Activated CD4-positive, alpha-beta memory T cell treated with anti-CD3 and anti-CD28 coated beads for 36 hours (primary cell): ENCODE measurements at regions of chr2 and their contacts with region 1.

Region 1: DNA sequence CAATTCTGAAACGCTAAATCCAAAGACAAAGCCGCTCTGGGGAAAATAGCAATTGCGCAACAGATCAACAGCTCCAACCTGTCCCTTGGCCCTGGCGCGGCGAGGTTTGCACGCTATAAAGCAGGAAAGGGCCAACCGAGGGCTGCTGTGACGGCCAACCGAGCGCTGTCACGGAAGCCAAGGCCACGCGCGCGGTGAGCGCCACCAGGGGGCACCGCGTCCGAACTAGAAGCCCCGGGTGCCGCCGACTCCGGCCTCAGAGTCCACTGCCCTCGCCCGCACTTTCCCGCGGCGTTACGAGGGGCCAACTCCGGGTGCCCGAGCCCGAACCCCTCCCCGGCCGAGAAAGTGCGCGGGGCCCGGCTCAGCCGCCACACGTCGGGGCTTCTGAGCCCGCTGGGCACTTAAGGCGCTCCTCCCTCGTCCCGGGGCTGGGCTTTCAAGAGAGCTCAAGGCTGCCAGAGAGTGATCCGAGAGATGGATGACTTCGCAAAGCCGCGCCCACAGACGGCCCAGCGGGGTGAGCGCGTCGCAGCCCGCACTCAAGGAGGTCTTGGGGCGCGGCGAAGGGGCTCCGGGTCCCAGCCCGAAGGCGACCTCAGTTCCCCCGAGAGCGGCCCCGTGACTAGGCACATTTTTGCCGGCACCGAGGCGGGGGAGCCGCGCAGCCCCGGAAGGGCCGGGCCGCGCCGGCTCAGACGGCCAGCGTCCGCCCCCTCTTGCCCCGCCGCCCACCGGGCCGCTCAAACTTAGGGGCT is 897 bp downstream of the NFE2L2 start:
- DNase-seq: peak; percentile 96
- H3K4me3 Mint-ChIP-seq: peak overlapping the region; percentile 86
- H3K27ac Mint-ChIP-seq: peak overlapping the region; percentile 99
- H3K4me1 Mint-ChIP-seq: peaks cover 52% of the 10 kb centered on the region
- H3K27me3 Mint-ChIP-seq: no peaks in the 10 kb centered on the region

Region 2: GRCh38 chr2:176931588-176932563 is 331.8 kb before region 1 on chr2:
- CTCF ChIA-PET with region 1: no interaction called
- POLR2A ChIA-PET with region 1: no interaction called
- intact Hi-C with region 1: loop called (anchors 10 kb)
- DNase-seq: peak; percentile 27
- H3K4me3 Mint-ChIP-seq: no peak overlapping the region
- H3K27ac Mint-ChIP-seq: peak overlapping the region; percentile 20
- H3K4me1 Mint-ChIP-seq: peaks cover 13% of the 10 kb centered on the region
- H3K27me3 Mint-ChIP-seq: peaks cover 1% of the 10 kb centered on the region

Region 3: DNA sequence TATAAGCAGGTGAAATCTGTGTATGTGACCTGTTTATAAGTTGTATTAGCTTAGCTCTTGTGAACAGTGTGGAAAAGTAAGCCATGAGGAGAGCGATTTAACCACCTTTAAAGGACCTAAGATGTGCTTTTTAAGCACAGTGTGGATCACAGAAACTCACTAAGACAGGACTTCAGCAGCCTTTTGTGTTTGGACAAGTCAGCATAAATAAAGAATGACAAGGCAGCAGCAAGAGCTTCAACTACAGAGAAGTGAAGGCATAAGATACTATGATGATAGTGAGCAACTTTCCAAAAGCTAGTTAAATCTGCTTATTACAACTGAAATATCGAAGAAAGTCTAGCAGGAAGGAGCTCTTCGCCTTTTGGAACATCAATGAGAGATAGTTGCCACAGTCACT is 42.1 kb before region 1 on chr2:
- CTCF ChIA-PET with region 1: interaction called, 16 read pairs
- POLR2A ChIA-PET with region 1: interaction called, 13 read pairs
- intact Hi-C with region 1: no loop called
- DNase-seq: no peak
- H3K4me3 Mint-ChIP-seq: no peak overlapping the region
- H3K27ac Mint-ChIP-seq: no peak overlapping the region
- H3K4me1 Mint-ChIP-seq: peaks cover 61% of the 10 kb centered on the region
- H3K27me3 Mint-ChIP-seq: no peaks in the 10 kb centered on the region

Region 4: DNA sequence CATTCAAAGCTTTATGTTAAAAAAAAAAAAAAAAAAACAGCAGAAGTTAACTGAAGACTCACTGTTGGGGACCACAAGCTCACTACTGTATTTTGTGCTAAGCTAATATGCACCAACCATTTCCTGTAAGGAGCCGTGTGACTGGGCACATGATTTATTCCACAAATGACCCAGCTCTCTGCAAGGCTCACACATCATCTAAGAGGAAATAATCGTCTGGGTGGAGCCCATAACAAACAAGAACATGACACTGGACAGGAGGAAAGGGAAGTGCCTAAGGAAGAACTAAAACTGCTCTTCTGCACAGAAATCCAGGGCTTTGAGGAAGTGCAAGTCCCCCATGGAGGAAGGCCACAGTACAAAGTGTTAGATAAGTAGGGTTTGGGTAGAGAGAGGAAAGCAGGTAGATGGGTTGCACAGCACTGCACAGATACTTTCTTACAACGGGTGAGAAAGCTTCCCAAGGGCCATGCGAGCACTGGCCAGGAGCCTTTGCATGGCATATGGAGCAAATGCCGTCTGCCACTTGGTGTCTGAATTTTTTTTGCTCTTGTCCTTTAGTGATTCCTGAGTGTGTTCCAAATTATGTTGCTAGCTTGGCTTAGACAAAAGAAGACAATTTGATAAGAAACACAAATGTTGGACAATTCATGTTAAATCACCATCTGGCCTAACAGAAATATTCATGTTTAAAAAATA is 23.5 kb before region 1 on chr2:
- CTCF ChIA-PET with region 1: interaction called, 38 read pairs
- POLR2A ChIA-PET with region 1: interaction called, 28 read pairs
- intact Hi-C with region 1: loop called (anchors 1 kb)
- DNase-seq: peak; percentile 61
- H3K4me3 Mint-ChIP-seq: no peak overlapping the region
- H3K27ac Mint-ChIP-seq: peak overlapping the region; percentile 83
- H3K4me1 Mint-ChIP-seq: peaks cover 82% of the 10 kb centered on the region
- H3K27me3 Mint-ChIP-seq: no peaks in the 10 kb centered on the region

Region 5: GRCh38 chr2:177296040-177296439 is 32.4 kb after region 1 on chr2:
- CTCF ChIA-PET with region 1: interaction called, 30 read pairs
- POLR2A ChIA-PET with region 1: interaction called, 27 read pairs
- intact Hi-C with region 1: loop called (anchors 1 kb)
- DNase-seq: no peak
- H3K4me3 Mint-ChIP-seq: no peak overlapping the region
- H3K27ac Mint-ChIP-seq: no peak overlapping the region
- H3K4me1 Mint-ChIP-seq: peaks cover 22% of the 10 kb centered on the region
- H3K27me3 Mint-ChIP-seq: no peaks in the 10 kb centered on the region

Region 6: DNA sequence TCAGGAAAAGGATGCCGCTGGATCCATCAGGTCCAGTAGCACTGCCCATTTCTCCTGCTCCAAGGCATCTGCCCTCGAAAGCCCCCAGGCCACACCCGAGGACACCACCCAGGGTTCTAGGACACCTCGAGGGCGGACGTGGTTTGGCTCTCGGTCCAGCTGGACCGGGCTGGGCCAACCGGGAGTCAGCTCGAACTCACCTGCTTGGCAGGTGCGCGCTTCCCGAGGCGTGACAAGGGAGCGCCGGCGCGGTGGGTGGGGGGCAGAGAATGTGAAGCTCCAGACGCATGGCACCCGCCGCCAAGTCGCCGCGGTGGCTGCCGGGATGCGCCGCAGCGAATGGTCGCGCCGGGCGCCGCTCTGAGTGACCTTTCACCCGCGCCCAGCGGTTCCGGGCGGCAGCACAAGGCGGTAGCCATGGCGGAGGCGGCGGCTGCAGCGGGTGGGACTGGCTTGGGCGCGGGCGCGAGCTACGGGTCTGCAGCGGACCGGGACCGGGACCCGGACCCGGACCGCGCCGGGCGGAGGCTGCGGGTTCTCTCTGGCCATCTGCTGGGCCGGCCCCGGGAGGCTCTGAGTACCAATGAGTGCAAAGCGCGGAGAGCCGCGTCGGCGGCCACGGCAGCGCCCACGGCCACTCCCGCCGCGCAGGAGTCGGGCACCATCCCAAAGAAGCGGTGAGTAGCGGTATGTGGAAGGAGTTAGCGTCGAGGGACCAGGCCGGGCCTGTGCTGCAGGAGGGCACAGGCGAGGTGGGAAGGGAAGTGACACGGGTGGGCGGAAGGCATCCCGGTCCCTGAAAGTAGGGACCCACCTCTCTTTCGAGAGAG is 129.0 kb after region 1 on chr2 and contains the start of gene AGPS:
- CTCF ChIA-PET with region 1: interaction called, 9 read pairs
- POLR2A ChIA-PET with region 1: interaction called, 17 read pairs
- intact Hi-C with region 1: loop called (anchors 5 kb)
- DNase-seq: peak; percentile 88
- H3K4me3 Mint-ChIP-seq: peak within 1 kb of the TSS; percentile 87
- H3K27ac Mint-ChIP-seq: peak within 1 kb of the TSS; percentile 70
- H3K4me1 Mint-ChIP-seq: peaks cover 56% of the 10 kb centered on the region
- H3K27me3 Mint-ChIP-seq: no peaks in the 10 kb centered on the region
- total RNA-seq, gene AGPS: 51.9 to 53.0 TPM